Activated T-helper 2 cell treated with anti-CD3 and anti-CD28 coated beads, Interferon-gamma antibody, Interleukin-2, Interleukin-4, amounts not matched to agents 10 μg/mL and 5 μg/mL and 100 μg/mL, durations not matched to agents 14 hours and 24 hours and 36 hours (primary cell): ENCODE measurements at regions of chr16 and their contacts with region 1.

Region 1: GRCh38 chr16:12082226-12082887 is 105.8 kb downstream of the SNX29 start:
- DNase-seq: no peak
- H3K4me3 Mint-ChIP-seq: no peak overlapping the region
- H3K27ac Mint-ChIP-seq: peak overlapping the region; percentile 88
- H3K4me1 Mint-ChIP-seq: peaks cover 39% of the 10 kb centered on the region
- H3K27me3 Mint-ChIP-seq: no peaks in the 10 kb centered on the region

Region 2: GRCh38 chr16:12803203-12804097 is 721.1 kb after region 1 on chr16 and contains the start of gene CPPED1:
- intact Hi-C with region 1: loop called (anchors 5 kb)
- DNase-seq: peak; percentile 88
- H3K4me3 Mint-ChIP-seq: peak within 1 kb of the TSS; percentile 95
- H3K27ac Mint-ChIP-seq: peak within 1 kb of the TSS; percentile 92
- H3K4me1 Mint-ChIP-seq: peaks cover 34% of the 10 kb centered on the region
- H3K27me3 Mint-ChIP-seq: no peaks in the 10 kb centered on the region
- total RNA-seq, gene CPPED1: 9.0 and 9.5 TPM in 2 replicates